Naive thymus-derived CD4-positive, alpha-beta T cell (primary cell): ENCODE measurements at regions of chr10 and their contacts with region 1.

Region 1: DNA sequence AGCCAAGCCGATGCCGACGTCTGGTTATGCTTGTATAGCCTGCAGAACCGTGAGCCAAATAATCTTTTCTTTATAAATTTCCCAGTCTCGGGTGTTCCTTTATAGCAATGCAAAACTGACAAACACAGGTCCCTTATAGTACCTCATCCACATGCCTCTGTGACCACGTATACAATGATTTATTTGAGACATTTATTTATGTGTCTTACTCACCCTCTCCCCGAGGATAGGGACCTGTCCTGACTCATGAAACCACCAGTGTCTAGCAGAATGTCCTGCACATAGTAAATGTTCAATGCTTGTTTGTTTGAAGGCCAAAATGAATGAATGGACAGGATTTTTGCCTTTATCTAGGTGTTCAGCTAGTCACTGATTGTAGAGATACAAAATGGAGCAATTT is 147.9 kb upstream of the FZD8 start:
- DNase-seq: no peak
- ATAC-seq: no peak
- H3K4me3 ChIP-seq: no peak overlapping the region
- H3K4me3 Mint-ChIP-seq: no peak overlapping the region
- H3K27ac ChIP-seq: no peak overlapping the region
- H3K27ac Mint-ChIP-seq: no peak overlapping the region
- H3K4me1 ChIP-seq: no peaks in the 10 kb centered on the region
- H3K4me1 Mint-ChIP-seq: no peaks in the 10 kb centered on the region
- H3K27me3 ChIP-seq: no peaks in the 10 kb centered on the region
- H3K27me3 Mint-ChIP-seq: peaks cover 0 to 20% (median 4%) of the 10 kb centered on the region in 5 donors

Region 2: GRCh38 chr10:35770817-35771355 is 19.1 kb before region 1 on chr10:
- CTCF ChIA-PET with region 1: no interaction called
- POLR2A ChIA-PET with region 1: no interaction called
- intact Hi-C with region 1: loop called in 1 of 2 experiments (anchors 1 kb)
- DNase-seq: no peak
- ATAC-seq: no peak
- H3K4me3 ChIP-seq: no peak overlapping the region
- H3K4me3 Mint-ChIP-seq: no peak overlapping the region
- H3K27ac ChIP-seq: no peak overlapping the region
- H3K27ac Mint-ChIP-seq: no peak overlapping the region
- H3K4me1 ChIP-seq: no peaks in the 10 kb centered on the region
- H3K4me1 Mint-ChIP-seq: no peaks in the 10 kb centered on the region
- H3K27me3 ChIP-seq: no peaks in the 10 kb centered on the region
- H3K27me3 Mint-ChIP-seq: peaks cover 0 to 23% (median 6%) of the 10 kb centered on the region in 5 donors

Region 3: DNA sequence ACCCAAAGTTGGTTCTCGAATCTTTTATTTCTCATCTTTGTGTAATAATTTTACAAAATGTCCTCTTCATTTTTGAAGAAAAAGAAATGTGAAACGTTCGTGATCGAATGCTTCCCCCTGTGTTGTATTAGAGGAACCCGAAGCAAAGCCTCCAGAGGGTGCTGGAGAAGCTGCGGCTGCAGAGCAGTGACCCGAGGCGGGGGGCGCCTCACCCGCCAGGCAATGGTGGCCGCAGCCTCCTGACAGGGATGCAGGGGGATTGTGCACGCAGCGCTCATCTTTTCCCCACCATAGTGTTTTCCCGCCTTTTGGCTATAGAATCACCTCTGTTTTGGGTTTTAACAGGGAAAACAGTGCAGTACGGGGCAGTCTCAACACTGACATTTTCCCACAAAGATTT is 1027.9 kb after region 1 on chr10:
- CTCF ChIA-PET with region 1: no interaction called
- POLR2A ChIA-PET with region 1: no interaction called
- intact Hi-C with region 1: no loop called
- DNase-seq: no peak
- ATAC-seq: no peak
- H3K4me3 ChIP-seq: no peak overlapping the region
- H3K4me3 Mint-ChIP-seq: no peak overlapping the region
- H3K27ac ChIP-seq: no peak overlapping the region
- H3K27ac Mint-ChIP-seq: no peak overlapping the region
- H3K4me1 ChIP-seq: no peaks in the 10 kb centered on the region
- H3K4me1 Mint-ChIP-seq: no peaks in the 10 kb centered on the region
- H3K27me3 ChIP-seq: no peaks in the 10 kb centered on the region
- H3K27me3 Mint-ChIP-seq: no peaks in the 10 kb centered on the region